B cell (primary cell): ENCODE measurements at regions of chr4 and their contacts with region 1.

Region 1: DNA sequence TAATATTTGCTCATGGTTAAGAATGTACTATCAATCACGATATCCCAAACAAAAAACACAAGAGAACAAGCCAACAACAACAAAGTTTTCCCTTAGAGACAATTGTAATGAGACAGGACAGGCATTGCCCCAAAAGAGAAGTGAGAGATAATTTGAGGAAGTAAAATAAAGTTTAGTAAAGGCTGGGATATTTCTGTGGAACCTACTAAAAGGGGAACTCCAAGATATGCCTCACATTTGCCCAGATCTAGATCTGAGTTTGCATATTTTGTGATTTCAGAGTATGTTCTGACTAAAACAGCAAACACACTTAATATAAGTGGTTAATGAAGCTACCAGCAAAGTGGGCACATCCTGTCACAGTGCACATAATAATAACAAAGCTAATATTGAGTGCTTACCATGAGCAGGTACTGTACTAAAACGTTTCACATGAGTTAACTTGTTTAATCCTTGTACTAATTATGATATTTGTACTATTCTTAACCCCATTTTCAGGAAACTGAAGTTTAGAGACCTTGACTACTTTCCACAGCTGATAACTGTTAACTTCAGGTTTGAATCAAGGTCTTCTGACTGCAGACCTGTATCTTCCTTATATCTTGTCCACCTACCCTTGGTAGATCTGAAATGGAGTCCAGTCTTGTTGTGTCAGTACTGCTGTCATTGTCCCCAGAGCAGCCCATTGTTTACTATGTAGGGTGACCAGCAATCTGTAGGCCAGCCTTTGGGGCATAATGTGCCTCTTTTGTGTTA is 26.0 kb upstream of the BMP2K start:
- DNase-seq: peak; percentile 85
- ATAC-seq: peak; percentile 82
- H3K4me3 ChIP-seq: peak overlapping the region in 1 of 5 experiments; percentile 48
- H3K4me3 Mint-ChIP-seq: peak overlapping the region; percentile 59
- H3K27ac ChIP-seq: peak overlapping the region; percentile 86 to 87
- H3K27ac Mint-ChIP-seq: peak overlapping the region; percentile 92
- H3K4me1 ChIP-seq: peaks cover 51 to 54% of the 10 kb centered on the region in 2 donors
- H3K4me1 Mint-ChIP-seq: peaks cover 63% of the 10 kb centered on the region
- H3K27me3 ChIP-seq: no peaks in the 10 kb centered on the region
- H3K27me3 Mint-ChIP-seq: no peaks in the 10 kb centered on the region
- CTCF ChIP-seq: no peak

Region 2: DNA sequence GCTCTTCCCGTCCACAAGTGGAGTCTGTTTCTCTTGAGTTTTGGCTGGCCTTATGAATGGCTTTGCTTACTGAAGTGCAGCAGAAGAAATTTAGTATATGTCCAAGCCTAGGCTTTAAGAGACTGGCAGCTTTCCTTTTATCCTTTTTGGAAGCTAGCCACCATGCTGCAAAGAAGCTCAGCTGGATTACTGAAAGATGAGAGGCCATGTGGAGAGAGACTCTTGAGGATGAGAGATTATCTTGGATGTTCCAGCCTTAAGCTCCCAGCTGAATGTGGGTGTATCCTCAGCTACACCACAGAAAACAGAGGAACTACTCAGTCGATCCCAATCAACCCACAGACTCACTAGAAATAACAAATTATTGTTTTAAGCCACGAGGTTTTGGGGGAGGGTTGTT is 1580.7 kb before region 1 on chr4:
- CTCF ChIA-PET with region 1: no interaction called
- POLR2A ChIA-PET with region 1: no interaction called
- intact Hi-C with region 1: no loop called
- DNase-seq: no peak
- ATAC-seq: no peak
- H3K4me3 ChIP-seq: no peak overlapping the region
- H3K4me3 Mint-ChIP-seq: no peak overlapping the region
- H3K27ac ChIP-seq: peak overlapping the region in 1 of 2 donors; percentile 41
- H3K27ac Mint-ChIP-seq: peak overlapping the region; percentile 51
- H3K4me1 ChIP-seq: peaks cover 0 to 3% of the 10 kb centered on the region in 2 donors
- H3K4me1 Mint-ChIP-seq: peaks cover 19% of the 10 kb centered on the region
- H3K27me3 ChIP-seq: no peaks in the 10 kb centered on the region
- H3K27me3 Mint-ChIP-seq: no peaks in the 10 kb centered on the region
- CTCF ChIP-seq: no peak

Region 3: DNA sequence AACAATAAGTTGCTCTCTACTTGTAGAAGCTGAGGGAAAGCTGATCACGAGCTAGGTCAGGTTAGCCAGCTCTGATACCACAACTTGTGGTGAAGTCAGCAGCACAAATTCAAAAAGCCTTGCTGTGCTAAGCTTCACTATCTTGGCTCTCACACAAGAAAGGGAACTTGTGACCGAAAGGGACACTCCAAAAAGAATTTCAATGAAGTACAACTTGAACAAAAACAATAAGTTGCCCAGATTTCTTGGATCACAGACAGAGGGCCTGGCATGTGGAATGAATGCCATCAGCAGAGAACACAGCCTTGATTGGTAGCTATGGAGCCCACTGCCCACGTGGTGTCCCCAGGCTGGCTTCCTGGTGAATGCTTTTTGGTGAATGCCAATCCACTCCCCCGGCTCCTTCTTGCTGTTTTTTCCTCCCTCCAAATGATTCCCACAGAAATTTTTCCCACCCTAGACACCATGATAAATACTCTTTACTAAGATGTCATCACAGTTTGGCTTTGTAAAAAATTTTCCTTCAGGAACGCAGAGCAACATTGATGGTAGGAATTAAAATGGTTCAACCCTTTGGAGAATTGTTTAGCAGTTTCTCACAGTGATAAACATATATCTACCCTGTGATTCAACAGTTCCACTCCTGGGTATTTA is 116.0 kb before region 1 on chr4:
- CTCF ChIA-PET with region 1: no interaction called
- POLR2A ChIA-PET with region 1: no interaction called
- intact Hi-C with region 1: no loop called
- DNase-seq: peak; percentile 48
- ATAC-seq: no peak
- H3K4me3 ChIP-seq: no peak overlapping the region
- H3K4me3 Mint-ChIP-seq: no peak overlapping the region
- H3K27ac ChIP-seq: peak overlapping the region in 1 of 2 donors; percentile 50
- H3K27ac Mint-ChIP-seq: peak overlapping the region; percentile 60
- H3K4me1 ChIP-seq: peaks cover 71 to 73% of the 10 kb centered on the region in 2 donors
- H3K4me1 Mint-ChIP-seq: peaks cover 74% of the 10 kb centered on the region
- H3K27me3 ChIP-seq: no peaks in the 10 kb centered on the region
- H3K27me3 Mint-ChIP-seq: no peaks in the 10 kb centered on the region
- CTCF ChIP-seq: no peak

Region 4: DNA sequence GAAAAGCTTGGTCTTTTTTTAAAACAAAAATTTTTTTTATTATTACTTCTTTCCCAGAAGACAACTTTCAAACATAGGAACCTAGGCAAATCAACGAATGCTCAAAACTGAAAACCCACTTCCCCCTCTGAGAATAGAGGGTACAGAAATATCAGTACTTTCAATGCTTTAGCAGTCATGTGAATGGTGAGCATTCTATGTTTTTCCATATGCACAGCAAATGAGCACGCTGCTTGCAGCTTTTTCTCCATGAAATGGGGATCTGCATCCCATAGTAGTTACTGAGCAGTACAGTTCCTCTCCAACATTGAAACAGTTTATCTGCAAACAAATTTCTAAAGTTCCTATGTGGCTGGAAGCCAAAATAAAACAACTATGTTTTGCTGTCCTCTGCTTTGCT is 82.4 kb before region 1 on chr4:
- CTCF ChIA-PET with region 1: no interaction called
- POLR2A ChIA-PET with region 1: no interaction called
- intact Hi-C with region 1: loop called (anchors 5 kb)
- DNase-seq: peak; percentile 47
- ATAC-seq: peak; percentile 62
- H3K4me3 ChIP-seq: peak overlapping the region in 2 of 5 experiments; percentile 26 to 28
- H3K4me3 Mint-ChIP-seq: peak overlapping the region; percentile 80
- H3K27ac ChIP-seq: peak overlapping the region; percentile 50 to 73
- H3K27ac Mint-ChIP-seq: peak overlapping the region; percentile 85
- H3K4me1 ChIP-seq: peaks cover 75 to 78% of the 10 kb centered on the region in 2 donors
- H3K4me1 Mint-ChIP-seq: peaks cover 88% of the 10 kb centered on the region
- H3K27me3 ChIP-seq: no peaks in the 10 kb centered on the region
- H3K27me3 Mint-ChIP-seq: no peaks in the 10 kb centered on the region
- CTCF ChIP-seq: no peak

Region 5: GRCh38 chr4:78704981-78705683 is 45.0 kb before region 1 on chr4:
- CTCF ChIA-PET with region 1: interaction called, 3 read pairs
- POLR2A ChIA-PET with region 1: no interaction called
- intact Hi-C with region 1: loop called (anchors 5 kb)
- DNase-seq: no peak
- ATAC-seq: no peak
- H3K4me3 ChIP-seq: no peak overlapping the region
- H3K4me3 Mint-ChIP-seq: no peak overlapping the region
- H3K27ac ChIP-seq: peak overlapping the region in 1 of 2 donors; percentile 21
- H3K27ac Mint-ChIP-seq: peak overlapping the region; percentile 72
- H3K4me1 ChIP-seq: peaks cover 22 to 34% of the 10 kb centered on the region in 2 donors
- H3K4me1 Mint-ChIP-seq: peaks cover 46% of the 10 kb centered on the region
- H3K27me3 ChIP-seq: no peaks in the 10 kb centered on the region
- H3K27me3 Mint-ChIP-seq: no peaks in the 10 kb centered on the region
- CTCF ChIP-seq: no peak

Region 6: DNA sequence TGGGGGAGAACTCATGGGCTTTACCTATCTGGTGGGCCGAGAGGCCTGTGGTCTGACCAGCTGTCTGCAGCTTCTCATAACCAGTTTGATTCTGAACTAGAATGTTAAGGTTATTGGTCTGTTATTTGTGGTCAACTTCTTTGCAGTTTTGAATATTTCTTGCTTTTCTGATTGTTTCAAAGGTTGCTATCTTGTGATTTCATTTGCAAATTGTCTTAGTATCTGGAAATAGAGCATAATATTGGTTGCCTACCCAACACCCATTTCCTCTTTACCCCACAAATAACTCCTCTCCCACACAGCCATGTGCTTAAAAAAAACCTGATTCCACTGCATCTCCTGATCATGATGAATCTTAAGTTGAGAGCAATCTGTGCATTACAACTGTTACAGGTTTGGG is 13.1 kb before region 1 on chr4:
- CTCF ChIA-PET with region 1: interaction called, 6 read pairs
- POLR2A ChIA-PET with region 1: interaction called, 6 read pairs
- intact Hi-C with region 1: loop called (anchors 1 kb)
- DNase-seq: no peak
- ATAC-seq: peak; percentile 32
- H3K4me3 ChIP-seq: no peak overlapping the region
- H3K4me3 Mint-ChIP-seq: peak overlapping the region; percentile 16
- H3K27ac ChIP-seq: peak overlapping the region; percentile 24 to 67
- H3K27ac Mint-ChIP-seq: peak overlapping the region; percentile 90
- H3K4me1 ChIP-seq: peaks cover 41 to 49% of the 10 kb centered on the region in 2 donors
- H3K4me1 Mint-ChIP-seq: peaks cover 60% of the 10 kb centered on the region
- H3K27me3 ChIP-seq: no peaks in the 10 kb centered on the region
- H3K27me3 Mint-ChIP-seq: no peaks in the 10 kb centered on the region
- CTCF ChIP-seq: no peak

Region 7: GRCh38 chr4:78766650-78767049 is 16.5 kb after region 1 on chr4:
- CTCF ChIA-PET with region 1: interaction called, 5 read pairs
- POLR2A ChIA-PET with region 1: interaction called, 6 read pairs
- intact Hi-C with region 1: loop called (anchors 1 kb)
- DNase-seq: peak; percentile 69
- ATAC-seq: peak; percentile 91
- H3K4me3 ChIP-seq: peak overlapping the region in 1 of 5 experiments; percentile 49
- H3K4me3 Mint-ChIP-seq: peak overlapping the region; percentile 77
- H3K27ac ChIP-seq: peak overlapping the region; percentile 26 to 70
- H3K27ac Mint-ChIP-seq: peak overlapping the region; percentile 80
- H3K4me1 ChIP-seq: peaks cover 22 to 26% of the 10 kb centered on the region in 2 donors
- H3K4me1 Mint-ChIP-seq: peaks cover 29% of the 10 kb centered on the region
- H3K27me3 ChIP-seq: no peaks in the 10 kb centered on the region
- H3K27me3 Mint-ChIP-seq: no peaks in the 10 kb centered on the region
- CTCF ChIP-seq: no peak

Region 8: DNA sequence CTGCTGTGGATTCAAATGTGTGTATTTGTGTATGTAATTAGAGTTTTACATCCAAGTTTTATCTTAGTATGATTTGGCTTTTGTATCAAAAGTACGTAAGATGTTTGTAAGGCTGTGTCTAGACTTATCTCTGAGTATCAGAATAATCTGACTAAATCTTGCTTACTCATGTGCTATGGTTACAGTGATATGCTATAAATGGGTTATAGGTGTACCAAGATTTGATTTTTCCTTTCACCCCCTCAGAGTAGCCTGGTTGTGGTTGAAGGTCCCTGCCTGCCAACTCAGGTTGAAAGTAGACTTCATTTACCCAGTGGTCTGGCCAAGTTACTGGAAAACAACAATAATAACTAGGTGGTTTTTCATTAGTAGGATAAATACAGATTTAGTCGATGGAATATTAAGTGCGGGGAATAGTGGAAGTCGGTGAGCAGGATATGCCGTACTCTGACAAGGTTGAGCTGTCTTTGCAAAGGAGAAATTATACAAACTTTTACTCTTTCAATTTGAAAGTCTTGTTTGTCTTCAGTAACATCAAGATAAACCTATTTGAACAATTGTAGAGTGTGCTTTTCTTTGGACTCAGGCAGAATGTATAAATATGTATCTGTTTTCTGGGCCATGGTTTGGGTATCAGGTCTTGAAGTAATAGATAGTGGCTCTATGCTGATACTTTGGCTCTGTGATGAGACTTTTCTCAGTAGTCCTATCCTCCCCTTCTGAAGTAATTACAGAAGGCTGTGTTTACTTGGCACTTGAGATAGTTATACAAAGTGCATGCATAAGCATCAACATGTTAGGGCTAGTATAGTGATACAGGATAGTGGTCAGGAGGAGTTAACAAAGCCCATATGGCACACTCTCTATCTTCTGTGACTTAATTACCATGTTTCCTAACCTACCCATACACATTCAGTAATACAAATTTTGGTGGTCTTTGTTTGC is 49.7 kb after region 1 on chr4:
- CTCF ChIA-PET with region 1: no interaction called
- POLR2A ChIA-PET with region 1: no interaction called
- intact Hi-C with region 1: no loop called
- DNase-seq: no peak
- ATAC-seq: peak; percentile 24
- H3K4me3 ChIP-seq: no peak overlapping the region
- H3K4me3 Mint-ChIP-seq: peak overlapping the region; percentile 33
- H3K27ac ChIP-seq: peak overlapping the region in 1 of 2 donors; percentile 71
- H3K27ac Mint-ChIP-seq: peak overlapping the region; percentile 7
- H3K4me1 ChIP-seq: peaks cover 24 to 56% of the 10 kb centered on the region in 2 donors
- H3K4me1 Mint-ChIP-seq: peaks cover 68% of the 10 kb centered on the region
- H3K27me3 ChIP-seq: no peaks in the 10 kb centered on the region
- H3K27me3 Mint-ChIP-seq: no peaks in the 10 kb centered on the region
- CTCF ChIP-seq: no peak

Region 9: DNA sequence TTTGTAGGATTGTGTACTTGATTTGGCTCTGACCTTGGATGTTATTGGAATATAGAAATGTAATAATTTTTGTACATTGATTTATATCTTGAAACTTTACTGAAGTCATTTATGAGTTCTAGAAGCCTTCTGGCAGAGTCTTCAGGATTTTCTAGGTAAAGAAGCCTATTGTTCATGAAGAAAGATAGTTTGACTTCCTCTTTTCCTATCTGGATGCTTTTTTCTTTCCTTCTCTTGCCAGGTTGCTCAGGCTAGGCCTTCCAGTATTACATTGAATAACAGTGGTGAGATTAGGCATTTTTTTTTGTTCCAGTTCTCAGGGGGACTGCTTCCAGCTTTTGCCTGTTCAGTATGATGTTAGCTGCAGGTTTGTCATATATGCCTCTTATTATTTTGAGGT is 384.6 kb after region 1 on chr4:
- CTCF ChIA-PET with region 1: no interaction called
- POLR2A ChIA-PET with region 1: no interaction called
- intact Hi-C with region 1: no loop called
- DNase-seq: no peak
- ATAC-seq: no peak
- H3K4me3 ChIP-seq: no peak overlapping the region
- H3K4me3 Mint-ChIP-seq: no peak overlapping the region
- H3K27ac ChIP-seq: no peak overlapping the region
- H3K27ac Mint-ChIP-seq: no peak overlapping the region
- H3K4me1 ChIP-seq: no peaks in the 10 kb centered on the region
- H3K4me1 Mint-ChIP-seq: no peaks in the 10 kb centered on the region
- H3K27me3 ChIP-seq: no peaks in the 10 kb centered on the region
- H3K27me3 Mint-ChIP-seq: peaks cover 3% of the 10 kb centered on the region
- CTCF ChIP-seq: no peak